SK-N-SH (cell line): ENCODE measurements at regions of chr20 and their contacts with region 1.

Region 1: GRCh38 chr20:49846206-49846807 is 33.7 kb downstream of the SLC9A8 start:
- DNase-seq: peak; percentile 65
- H3K4me3 ChIP-seq: no peak overlapping the region
- H3K27ac ChIP-seq: no peak overlapping the region
- H3K4me1 ChIP-seq: peaks cover 0 to 11% of the 10 kb centered on the region in 2 experiments; a peak in 2 of 4 replicates
- H3K27me3 ChIP-seq: no peaks in the 10 kb centered on the region
- CTCF ChIP-seq: peak; percentile 75
- EP300 ChIP-seq: no peak
- RAD21 ChIP-seq: peak; percentile 88

Region 2: GRCh38 chr20:49594143-49594930 is 252.0 kb before region 1 on chr20:
- CTCF ChIA-PET with region 1: interaction called, 13 read pairs
- POLR2A ChIA-PET with region 1: no interaction called
- DNase-seq: no peak
- H3K4me3 ChIP-seq: no peak overlapping the region
- H3K27ac ChIP-seq: no peak overlapping the region
- H3K4me1 ChIP-seq: peaks cover 0 to 5% of the 10 kb centered on the region in 2 experiments; a peak in 1 of 4 replicates
- H3K27me3 ChIP-seq: no peaks in the 10 kb centered on the region
- CTCF ChIP-seq: no peak
- EP300 ChIP-seq: no peak
- RAD21 ChIP-seq: no peak

Region 3: GRCh38 chr20:49821870-49822331 is 24.4 kb before region 1 on chr20:
- CTCF ChIA-PET with region 1: interaction called, 10 read pairs
- POLR2A ChIA-PET with region 1: interaction called, 3 read pairs
- DNase-seq: no peak
- H3K4me3 ChIP-seq: no peak overlapping the region
- H3K27ac ChIP-seq: no peak overlapping the region; a peak in 1 of 4 replicates
- H3K4me1 ChIP-seq: no peaks in the 10 kb centered on the region
- H3K27me3 ChIP-seq: no peaks in the 10 kb centered on the region
- CTCF ChIP-seq: no peak
- EP300 ChIP-seq: no peak
- RAD21 ChIP-seq: no peak

Region 4: DNA sequence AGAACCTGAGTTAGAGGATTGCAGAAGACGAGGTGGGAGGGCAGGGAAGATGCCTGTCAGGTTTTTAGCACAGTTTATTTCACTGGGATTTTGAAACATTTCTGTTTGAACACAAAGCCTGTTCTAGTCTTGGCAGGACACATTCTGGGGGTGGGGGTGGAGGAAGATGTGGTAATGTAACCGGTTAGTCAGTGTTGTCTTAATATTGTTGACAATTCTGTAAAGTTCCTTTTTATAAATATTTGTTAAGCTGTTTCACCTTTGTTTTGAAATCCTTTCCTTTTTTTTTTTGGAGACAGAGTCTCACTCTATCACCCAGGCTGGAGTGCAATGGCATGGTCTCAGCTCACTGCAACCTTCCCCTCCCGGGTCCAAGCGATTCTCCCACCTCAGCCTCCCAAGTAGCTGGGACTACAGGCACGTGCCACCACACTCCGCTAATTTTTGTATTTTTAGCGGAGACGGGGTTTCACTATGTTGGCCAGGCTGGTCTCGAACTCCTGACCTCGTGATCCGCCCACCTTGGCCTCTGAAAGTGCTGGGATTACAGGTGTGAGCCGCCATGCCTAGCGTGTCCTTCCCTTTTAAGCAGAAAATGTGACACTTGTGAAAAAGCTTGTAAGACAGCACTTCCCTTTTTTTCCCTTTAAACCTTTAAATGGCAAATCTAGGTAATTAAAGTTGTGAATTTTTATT is 13.5 kb before region 1 on chr20:
- CTCF ChIA-PET with region 1: interaction called, 22 read pairs
- POLR2A ChIA-PET with region 1: no interaction called
- DNase-seq: no peak
- H3K4me3 ChIP-seq: no peak overlapping the region
- H3K27ac ChIP-seq: no peak overlapping the region
- H3K4me1 ChIP-seq: peaks cover 0 to 7% of the 10 kb centered on the region in 2 experiments; a peak in 1 of 4 replicates
- H3K27me3 ChIP-seq: no peaks in the 10 kb centered on the region
- CTCF ChIP-seq: no peak
- EP300 ChIP-seq: no peak
- RAD21 ChIP-seq: no peak

Region 5: DNA sequence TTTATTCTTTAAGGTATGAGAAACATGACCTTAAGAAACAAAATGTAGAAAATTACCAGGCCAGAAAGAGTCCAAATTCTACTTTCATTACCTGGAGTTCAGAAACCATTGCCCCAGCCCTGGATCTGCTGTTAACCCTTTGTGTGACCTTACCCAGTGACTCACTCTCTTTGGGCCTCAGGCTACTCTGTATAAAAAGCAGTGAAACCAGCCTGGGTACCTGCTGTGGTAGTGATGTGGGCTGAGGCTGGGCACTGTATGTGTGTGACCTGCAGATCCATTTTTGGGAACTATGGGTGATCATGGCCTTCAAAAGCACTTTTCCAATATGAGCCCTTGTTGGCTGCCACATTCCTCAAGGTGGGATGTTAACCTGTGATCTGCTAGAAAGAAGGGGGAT is 13.5 kb after region 1 on chr20:
- CTCF ChIA-PET with region 1: interaction called, 11 read pairs
- POLR2A ChIA-PET with region 1: no interaction called
- DNase-seq: no peak
- H3K4me3 ChIP-seq: no peak overlapping the region
- H3K27ac ChIP-seq: no peak overlapping the region
- H3K4me1 ChIP-seq: no peaks in the 10 kb centered on the region
- H3K27me3 ChIP-seq: no peaks in the 10 kb centered on the region
- CTCF ChIP-seq: no peak
- EP300 ChIP-seq: no peak
- RAD21 ChIP-seq: no peak

Region 6: DNA sequence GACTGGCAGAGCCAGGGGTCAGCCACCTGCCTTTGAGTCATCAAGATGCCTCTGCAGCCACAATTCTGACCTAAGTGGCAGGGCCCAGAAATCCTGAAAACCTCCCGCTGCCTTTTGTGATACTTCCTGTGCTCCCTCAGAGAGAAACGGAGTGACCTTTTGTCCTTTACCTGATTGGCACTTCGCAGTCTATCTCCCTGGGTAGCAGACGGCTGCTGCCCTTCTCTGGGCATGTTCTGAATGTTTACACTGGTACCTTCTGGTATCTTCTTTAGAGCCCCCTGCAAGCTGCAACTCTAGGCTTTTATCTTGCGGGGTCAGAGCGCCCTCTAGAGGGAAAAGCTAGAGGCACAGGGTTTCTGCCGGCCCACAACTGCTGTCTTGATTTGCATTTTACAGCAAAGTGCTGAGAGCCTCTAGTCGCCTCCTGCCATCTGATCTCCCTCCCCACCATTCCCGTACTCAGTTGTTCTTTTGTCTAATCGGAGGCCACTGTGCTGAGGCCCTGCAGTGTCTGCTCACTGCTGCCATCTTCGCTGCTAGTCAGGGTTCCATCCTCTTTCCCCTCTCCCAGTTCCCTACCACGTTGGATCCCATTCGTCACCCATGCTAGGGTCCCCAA is 42.1 kb after region 1 on chr20:
- CTCF ChIA-PET with region 1: interaction called, 10 read pairs
- POLR2A ChIA-PET with region 1: no interaction called
- DNase-seq: peak; percentile 85
- H3K4me3 ChIP-seq: peak overlapping the region in 1 of 2 experiments; percentile 55; a peak in 1 of 4 replicates
- H3K27ac ChIP-seq: no peak overlapping the region; a peak in 1 of 4 replicates
- H3K4me1 ChIP-seq: peaks cover 0 to 8% of the 10 kb centered on the region in 2 experiments; a peak in 1 of 4 replicates
- H3K27me3 ChIP-seq: no peaks in the 10 kb centered on the region
- CTCF ChIP-seq: peak; percentile 95
- EP300 ChIP-seq: peak in 1 of 2 experiments; percentile 37; a peak in 1 of 4 replicates
- RAD21 ChIP-seq: peak; percentile 87